WTC11 (cell line): ENCODE measurements at regions of chr11 and their contacts with region 1.

Region 1: GRCh38 chr11:47259178-47259977 is 1.6 kb downstream of the NR1H3 start:
- DNase-seq: peak; percentile 80
- ATAC-seq: peak; percentile 78
- H3K4me3 Mint-ChIP-seq: peak overlapping the region; percentile 16
- H3K27ac Mint-ChIP-seq: peak overlapping the region; percentile 78
- H3K4me1 Mint-ChIP-seq: peaks cover 24% of the 10 kb centered on the region
- H3K27me3 Mint-ChIP-seq: no peaks in the 10 kb centered on the region
- CTCF ChIP-seq: peak; percentile 38; the same call in 1 of the 2 replicates

Region 2: GRCh38 chr11:47176328-47177228 is 82.8 kb before region 1 on chr11 and contains the start of gene ARFGAP2:
- CTCF ChIA-PET with region 1: interaction called, 93 read pairs
- POLR2A ChIA-PET with region 1: no interaction called
- DNase-seq: peak; percentile 95
- ATAC-seq: peak; percentile 94
- H3K4me3 Mint-ChIP-seq: peak within 1 kb of the TSS; percentile 88
- H3K27ac Mint-ChIP-seq: peak within 1 kb of the TSS; percentile 98
- H3K4me1 Mint-ChIP-seq: peaks cover 16% of the 10 kb centered on the region
- H3K27me3 Mint-ChIP-seq: no peaks in the 10 kb centered on the region
- CTCF ChIP-seq: no peak
- total RNA-seq, gene ARFGAP2: 55.7 to 73.0 TPM (median 60.5 TPM) in 3 replicates

Region 3: GRCh38 chr11:47213985-47214564 is 45.3 kb before region 1 on chr11:
- CTCF ChIA-PET with region 1: interaction called, 65 read pairs
- POLR2A ChIA-PET with region 1: interaction called, 21 read pairs
- DNase-seq: peak; percentile 86
- ATAC-seq: peak; percentile 89
- H3K4me3 Mint-ChIP-seq: peak overlapping the region; percentile 97
- H3K27ac Mint-ChIP-seq: peak overlapping the region; percentile 100
- H3K4me1 Mint-ChIP-seq: peaks cover 29% of the 10 kb centered on the region
- H3K27me3 Mint-ChIP-seq: no peaks in the 10 kb centered on the region; the same call in 1 of the 2 replicates
- CTCF ChIP-seq: no peak

Region 4: DNA sequence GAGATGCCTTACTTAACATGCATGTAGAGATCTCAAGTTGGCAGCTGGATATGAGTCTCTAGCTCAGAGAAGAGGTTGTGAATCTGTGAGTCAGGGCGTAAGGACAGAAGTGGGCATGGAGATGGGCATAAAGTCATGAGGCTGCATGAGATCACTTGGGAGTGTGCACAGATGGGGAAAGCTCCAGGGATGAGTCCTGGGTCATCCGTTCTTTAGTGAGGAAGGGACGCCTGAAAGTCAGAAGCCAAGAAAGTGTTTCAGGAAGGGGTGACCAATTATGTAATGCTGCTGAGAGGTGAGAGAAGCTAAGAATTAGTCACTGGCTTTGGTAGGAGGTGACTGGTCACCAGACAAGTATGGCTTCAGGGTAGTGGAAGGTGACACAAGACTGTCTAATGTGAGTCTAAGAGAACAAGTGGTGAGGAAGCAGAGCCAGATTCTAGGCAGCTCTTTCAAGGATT is 17.5 kb before region 1 on chr11:
- CTCF ChIA-PET with region 1: interaction called, 120 read pairs
- POLR2A ChIA-PET with region 1: interaction called, 5 read pairs
- DNase-seq: no peak
- ATAC-seq: no peak
- H3K4me3 Mint-ChIP-seq: no peak overlapping the region
- H3K27ac Mint-ChIP-seq: no peak overlapping the region
- H3K4me1 Mint-ChIP-seq: no peaks in the 10 kb centered on the region; the same call in 1 of the 2 replicates
- H3K27me3 Mint-ChIP-seq: no peaks in the 10 kb centered on the region
- CTCF ChIP-seq: no peak

Region 5: GRCh38 chr11:47280099-47280498 is 20.7 kb after region 1 on chr11:
- CTCF ChIA-PET with region 1: interaction called, 16 read pairs
- POLR2A ChIA-PET with region 1: no interaction called
- DNase-seq: no peak
- ATAC-seq: no peak
- H3K4me3 Mint-ChIP-seq: no peak overlapping the region
- H3K27ac Mint-ChIP-seq: peak overlapping the region; percentile 81
- H3K4me1 Mint-ChIP-seq: peaks cover 10% of the 10 kb centered on the region
- H3K27me3 Mint-ChIP-seq: no peaks in the 10 kb centered on the region
- CTCF ChIP-seq: no peak